Activated CD4-positive, alpha-beta T cell treated with anti-CD3 and anti-CD28 coated beads, Interleukin-2, amount 10 ng/mL, durations not matched to agents 24 days and 14 days (primary cell): ENCODE measurements at regions of chr3 and their contacts with region 1.

Region 1: GRCh38 chr3:127831723-127832172 is 9.4 kb upstream of the MGLL start:
- DNase-seq: peak; percentile 75
- H3K4me3 Mint-ChIP-seq: no peak overlapping the region
- H3K27ac Mint-ChIP-seq: no peak overlapping the region
- H3K4me1 Mint-ChIP-seq: peaks cover 9% of the 10 kb centered on the region
- H3K27me3 Mint-ChIP-seq: peaks cover 5% of the 10 kb centered on the region

Region 2: DNA sequence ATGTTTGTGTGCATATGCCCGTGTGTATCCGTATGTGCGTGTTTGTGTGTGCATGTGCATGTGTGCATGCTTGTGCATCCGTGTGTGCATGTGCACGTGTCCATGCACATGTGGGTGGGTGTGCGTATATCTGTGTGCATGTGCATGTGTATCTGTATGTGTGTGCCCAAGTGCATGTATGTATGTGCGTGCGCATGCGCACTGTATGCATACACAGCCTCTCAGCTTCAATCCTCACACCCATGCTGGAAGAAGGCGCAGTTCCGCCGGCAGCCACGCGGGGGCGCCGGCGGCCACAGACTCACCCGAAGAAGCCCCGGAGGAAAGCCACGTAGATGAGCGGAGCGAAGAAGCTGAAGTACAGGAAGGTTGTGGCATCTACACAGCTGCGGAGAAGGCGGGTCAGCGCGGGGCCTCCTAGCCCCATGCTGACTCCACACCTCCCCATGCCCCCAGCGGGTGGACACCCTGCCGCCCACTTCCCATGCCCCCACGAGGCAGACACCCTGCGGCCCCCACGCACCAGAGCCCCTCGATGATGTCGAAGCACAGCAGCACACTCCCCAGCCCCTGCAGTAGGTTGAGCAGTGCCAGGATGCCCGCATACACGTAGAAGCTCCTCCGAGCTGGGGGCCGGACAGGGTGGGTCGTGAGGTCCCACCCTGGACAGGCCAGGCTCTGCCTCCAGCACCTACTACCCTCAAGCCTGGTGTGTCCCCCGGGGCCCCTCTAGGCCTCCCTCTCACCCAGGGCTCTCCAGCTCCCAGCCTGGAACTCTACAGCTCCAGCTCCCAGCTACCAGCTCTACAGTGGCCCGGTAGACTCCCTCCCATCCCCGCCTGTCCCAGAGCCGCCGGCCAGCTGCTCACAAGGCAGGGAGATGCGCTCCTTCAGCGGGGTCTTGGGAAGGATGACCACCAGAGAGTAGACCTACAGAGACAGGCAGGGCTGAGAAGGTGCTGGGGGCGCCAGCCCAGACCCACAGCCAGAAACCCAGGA is 256.6 kb before region 1 on chr3:
- intact Hi-C with region 1: loop called (anchors 5 kb)
- DNase-seq: peak; percentile 96
- H3K4me3 Mint-ChIP-seq: no peak overlapping the region
- H3K27ac Mint-ChIP-seq: no peak overlapping the region
- H3K4me1 Mint-ChIP-seq: peaks cover 7% of the 10 kb centered on the region
- H3K27me3 Mint-ChIP-seq: no peaks in the 10 kb centered on the region

Region 3: GRCh38 chr3:127637546-127637945 is 194.2 kb before region 1 on chr3:
- intact Hi-C with region 1: loop called (anchors 5 kb)
- DNase-seq: peak; percentile 88
- H3K4me3 Mint-ChIP-seq: peak overlapping the region; percentile 15
- H3K27ac Mint-ChIP-seq: peak overlapping the region; percentile 66
- H3K4me1 Mint-ChIP-seq: peaks cover 7% of the 10 kb centered on the region
- H3K27me3 Mint-ChIP-seq: peaks cover 14% of the 10 kb centered on the region

Region 4: DNA sequence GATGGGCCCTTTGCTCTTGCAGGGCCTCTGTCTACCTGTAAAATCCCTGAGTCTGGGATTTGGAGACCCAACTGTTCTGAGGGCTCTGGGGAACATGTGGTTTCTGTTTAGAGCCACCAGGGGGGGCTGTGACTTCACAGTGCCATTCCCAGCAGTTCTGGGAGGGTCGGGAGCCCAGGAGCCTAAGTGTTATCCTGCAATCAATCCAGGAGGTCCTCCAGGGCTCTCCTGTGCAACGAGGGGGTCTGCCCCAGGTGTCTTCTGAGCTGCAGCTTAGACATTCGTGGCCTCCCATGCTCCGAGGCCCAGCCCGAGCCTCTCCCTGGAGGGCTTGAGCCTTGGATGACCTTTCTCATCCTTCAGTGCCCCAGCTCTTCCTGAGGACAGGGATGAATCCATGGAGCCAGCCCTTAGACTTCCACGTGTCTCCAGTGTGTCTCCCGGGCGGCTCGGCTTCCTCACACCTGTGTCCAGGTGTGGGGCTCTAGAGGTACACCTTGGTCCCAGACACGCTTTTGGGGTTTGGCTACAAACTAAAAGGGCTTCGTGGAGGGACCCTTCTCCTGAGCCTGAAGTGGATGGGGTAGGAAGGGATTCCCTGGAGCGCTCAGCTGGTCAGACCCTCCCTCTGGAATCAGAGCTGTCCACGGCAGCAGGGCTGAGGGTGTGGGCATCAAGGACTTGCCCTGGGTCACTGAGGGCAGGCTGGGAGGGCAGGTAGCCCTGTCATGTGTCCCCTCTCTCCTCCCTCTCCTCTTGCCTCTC is 179.3 kb before region 1 on chr3:
- intact Hi-C with region 1: loop called (anchors 2 kb)
- DNase-seq: peak; percentile 76
- H3K4me3 Mint-ChIP-seq: no peak overlapping the region
- H3K27ac Mint-ChIP-seq: no peak overlapping the region
- H3K4me1 Mint-ChIP-seq: no peaks in the 10 kb centered on the region
- H3K27me3 Mint-ChIP-seq: peaks cover 6% of the 10 kb centered on the region

Region 5: DNA sequence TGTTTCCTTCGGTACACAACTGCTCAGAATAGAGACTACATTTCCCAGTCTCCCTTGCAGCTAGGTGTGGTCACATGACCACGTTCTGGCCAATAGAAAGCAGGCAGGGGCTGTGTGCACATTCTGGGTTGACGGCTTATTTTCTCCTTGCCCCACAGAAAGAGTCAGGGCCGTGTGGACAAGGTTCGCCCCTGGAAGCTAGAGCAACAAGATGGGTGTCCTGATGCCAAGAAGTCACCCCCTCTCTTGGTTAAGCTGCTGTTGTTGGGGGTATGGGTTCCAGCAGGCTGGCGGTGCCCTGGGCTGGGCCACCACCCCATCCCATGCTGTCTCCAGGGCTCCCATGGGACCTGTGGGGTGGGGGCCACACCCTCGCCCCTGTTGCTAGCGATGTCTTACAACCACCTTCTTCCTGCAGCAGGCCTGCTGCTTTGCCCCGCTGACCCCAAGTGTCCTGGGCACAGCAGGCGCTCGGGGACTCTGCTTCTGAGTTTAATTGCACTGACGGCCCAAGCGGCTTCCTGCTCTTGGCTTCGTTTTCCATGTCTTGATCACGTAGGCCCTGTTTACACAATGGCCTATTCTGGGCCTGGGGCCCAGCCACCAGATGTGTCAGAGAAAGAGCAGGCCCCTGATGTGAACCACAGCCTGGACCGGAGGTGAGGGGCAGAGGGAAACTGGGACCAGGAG is 134.1 kb before region 1 on chr3:
- intact Hi-C with region 1: loop called (anchors 5 kb)
- DNase-seq: peak; percentile 86
- H3K4me3 Mint-ChIP-seq: no peak overlapping the region
- H3K27ac Mint-ChIP-seq: no peak overlapping the region
- H3K4me1 Mint-ChIP-seq: peaks cover 3% of the 10 kb centered on the region
- H3K27me3 Mint-ChIP-seq: no peaks in the 10 kb centered on the region